Common myeloid progenitor, CD34-positive (primary cell): ENCODE measurements at regions of chr6 and their contacts with region 1.

Region 1: DNA sequence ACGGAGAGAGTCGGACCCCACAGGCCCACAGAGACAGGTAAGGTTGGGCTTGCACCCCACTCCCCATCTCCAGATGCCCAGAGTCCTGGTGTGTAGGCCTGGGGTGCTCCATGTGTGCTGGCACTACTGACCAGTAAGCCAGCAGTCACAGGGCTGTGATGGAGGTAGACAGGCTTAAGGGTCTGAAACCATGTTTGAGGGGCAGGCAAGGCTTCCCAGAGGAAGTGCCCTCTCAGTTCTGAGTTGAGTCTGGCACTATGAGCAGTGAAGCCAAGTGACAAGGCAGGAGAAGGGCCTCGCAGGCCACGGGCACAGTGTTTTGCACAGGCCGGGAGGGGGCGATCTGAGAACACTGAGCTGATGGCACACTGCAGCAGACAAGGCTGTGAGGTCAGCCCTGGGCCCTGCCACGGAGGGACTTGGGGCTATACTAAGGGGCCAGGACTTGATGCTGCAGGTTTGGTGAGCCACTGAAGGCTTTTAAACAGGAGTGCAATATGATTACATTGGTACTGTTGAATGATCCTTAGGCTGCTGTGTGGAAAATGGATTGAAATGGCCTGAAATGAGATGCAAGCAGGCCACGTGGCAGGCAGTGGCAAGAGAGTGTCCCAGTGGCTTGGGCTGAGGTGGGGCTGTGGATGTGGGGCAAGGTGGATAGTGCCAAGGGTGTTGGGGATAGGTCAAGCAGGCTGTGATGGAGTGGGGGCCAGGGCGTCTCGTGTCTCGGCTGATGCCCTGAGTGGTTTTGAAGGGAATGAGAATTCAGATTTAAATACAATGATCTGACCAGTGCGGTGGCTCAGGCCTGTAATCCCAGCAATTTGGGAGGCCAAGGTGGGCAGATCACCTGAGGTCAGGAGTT is 20.3 kb downstream of the TTBK1 start:
- DNase-seq: peak; percentile 71 to 83 (median 79)
- H3K4me3 ChIP-seq: no peak overlapping the region
- H3K27ac ChIP-seq: no peak overlapping the region
- H3K4me1 ChIP-seq: peaks cover 0 to 4% (median under 1%) of the 10 kb centered on the region in 4 experiments
- H3K27me3 ChIP-seq: peaks cover 0 to 16% (median 7%) of the 10 kb centered on the region in 5 experiments

Region 2: DNA sequence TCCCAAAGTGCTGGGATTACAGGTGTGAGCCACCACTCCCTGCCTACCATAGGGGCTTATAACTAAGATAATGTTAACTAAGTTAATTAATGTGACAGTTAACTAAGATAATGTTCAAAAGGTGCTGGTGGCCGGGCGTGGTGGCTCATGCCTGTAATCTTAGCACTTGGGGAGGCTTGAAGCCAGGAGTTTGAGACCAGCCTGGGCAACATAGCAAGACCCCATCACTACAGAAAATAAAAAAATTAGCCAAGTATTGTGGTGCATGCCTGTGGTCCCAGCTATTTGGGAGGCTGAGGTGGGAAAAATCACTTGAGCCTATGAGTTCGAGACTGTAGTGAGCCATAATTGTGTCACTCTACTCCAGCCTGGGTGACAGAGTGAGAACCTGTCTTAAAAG is 125.3 kb before region 1 on chr6:
- CTCF ChIA-PET with region 1: no interaction called
- POLR2A ChIA-PET with region 1: no interaction called
- DNase-seq: no peak
- H3K4me3 ChIP-seq: no peak overlapping the region
- H3K27ac ChIP-seq: no peak overlapping the region
- H3K4me1 ChIP-seq: peaks cover 0 to 5% (median 3%) of the 10 kb centered on the region in 4 experiments
- H3K27me3 ChIP-seq: no peaks in the 10 kb centered on the region

Region 3: GRCh38 chr6:43250992-43251373 is 12.6 kb before region 1 on chr6:
- CTCF ChIA-PET with region 1: interaction called, 13 read pairs
- POLR2A ChIA-PET with region 1: no interaction called
- DNase-seq: no peak
- H3K4me3 ChIP-seq: no peak overlapping the region
- H3K27ac ChIP-seq: no peak overlapping the region
- H3K4me1 ChIP-seq: peaks cover 0 to 20% (median 12%) of the 10 kb centered on the region in 4 experiments
- H3K27me3 ChIP-seq: peaks cover 0 to 39% (median 20%) of the 10 kb centered on the region in 5 experiments

Region 4: GRCh38 chr6:43308101-43308989 is 44.8 kb after region 1 on chr6 and contains the start of gene CRIP3:
- CTCF ChIA-PET with region 1: interaction called, 20 read pairs
- POLR2A ChIA-PET with region 1: no interaction called
- DNase-seq: peak; percentile 61 to 79 (median 73)
- H3K4me3 ChIP-seq: peak within 1 kb of the TSS; percentile 10 to 74 (median 32)
- H3K27ac ChIP-seq: no peak within 1 kb of the TSS
- H3K4me1 ChIP-seq: peaks cover 22 to 43% (median 26%) of the 10 kb centered on the region in 4 experiments
- H3K27me3 ChIP-seq: peaks cover 0 to 8% (median 0%) of the 10 kb centered on the region in 5 experiments